ENCODE measurements at regions of chr15 and their contacts with region 1.

Region 1: DNA sequence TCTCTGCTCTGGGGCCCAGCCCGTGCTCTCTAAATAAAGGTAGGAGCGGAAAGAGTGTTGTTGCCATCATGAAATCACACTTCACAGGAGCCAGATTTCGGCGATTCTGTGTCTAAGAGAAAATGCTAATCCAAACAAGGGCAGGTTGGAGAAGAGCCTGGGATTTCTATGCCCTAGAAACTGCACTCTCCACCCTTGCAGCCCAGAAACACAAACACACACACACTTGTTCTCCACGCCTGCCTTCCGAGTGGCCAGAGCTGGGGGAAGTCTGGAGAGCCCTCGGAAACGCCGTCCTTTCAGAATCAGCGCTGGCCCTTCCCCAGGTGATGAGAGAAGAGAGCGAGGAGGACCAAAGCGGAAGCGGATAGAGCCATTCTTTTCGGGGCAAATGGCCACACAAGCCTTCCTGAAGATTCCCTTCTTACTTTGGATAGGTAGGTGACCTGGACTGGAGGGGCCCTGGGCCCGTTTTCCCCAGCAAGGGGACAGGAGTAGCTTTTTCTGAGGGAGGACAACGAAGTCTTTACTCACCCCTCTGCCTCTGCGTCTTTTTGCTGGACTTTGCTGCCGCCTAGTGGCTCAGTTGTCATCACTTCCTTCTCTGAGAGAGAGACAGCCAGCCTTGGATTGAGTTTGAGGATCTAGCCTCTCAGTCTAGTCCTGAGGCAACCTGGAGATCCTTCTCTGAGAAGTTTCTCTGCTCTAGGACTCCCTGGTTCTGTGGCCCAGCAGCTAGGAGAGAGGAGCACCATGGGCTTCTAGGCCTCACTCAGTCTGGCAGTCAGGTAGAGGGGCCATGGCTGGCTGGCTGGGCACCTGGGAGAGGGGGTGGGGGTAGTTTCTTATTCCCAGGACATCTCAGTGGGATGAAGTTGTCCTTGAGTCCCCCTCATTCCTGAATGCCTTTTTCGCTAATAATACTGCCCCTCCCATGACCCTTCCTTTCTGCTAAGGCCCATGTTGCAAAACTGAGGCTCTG is 37.7 kb downstream of the SENP8 start:
- DNase-seq: peak; percentile 69 to 85 (median 71)
- ATAC-seq: peak; percentile 98
- H3K4me3 ChIP-seq: no peak overlapping the region
- H3K27ac ChIP-seq: no peak overlapping the region
- H3K4me1 ChIP-seq: no peaks in the 10 kb centered on the region; a peak in 1 of 5 replicates
- H3K27me3 ChIP-seq: peaks cover 10 to 29% of the 10 kb centered on the region in 2 experiments; a peak in 4 of 5 replicates
- CTCF ChIP-seq: peak; percentile 85 to 96 (median 93)
- EP300 ChIP-seq: no peak
- POLR2A ChIP-seq: no peak
- RAD21 ChIP-seq: peak; percentile 82 to 96

Region 2: GRCh38 chr15:71532994-71533393 is 622.9 kb before region 1 on chr15:
- CTCF ChIA-PET with region 1: no interaction called
- POLR2A ChIA-PET with region 1: no interaction called
- in situ Hi-C with region 1: loop called (anchors 10 kb)
- intact Hi-C with region 1: loop called (anchors 5 kb)
- DNase-seq: peak; percentile 25 to 66 (median 56)
- ATAC-seq: peak; percentile 67
- H3K4me3 ChIP-seq: no peak overlapping the region
- H3K27ac ChIP-seq: no peak overlapping the region
- H3K4me1 ChIP-seq: no peaks in the 10 kb centered on the region
- H3K27me3 ChIP-seq: 0 out of 5 replicates have a peak, but pooled peaks cover 0 to 4% of the 10 kb centered on the region in 2 experiments
- CTCF ChIP-seq: peak; percentile 62 to 69 (median 67)
- EP300 ChIP-seq: no peak
- POLR2A ChIP-seq: no peak
- RAD21 ChIP-seq: peak; percentile 31 to 54; a peak in 3 of 4 replicates

Region 3: DNA sequence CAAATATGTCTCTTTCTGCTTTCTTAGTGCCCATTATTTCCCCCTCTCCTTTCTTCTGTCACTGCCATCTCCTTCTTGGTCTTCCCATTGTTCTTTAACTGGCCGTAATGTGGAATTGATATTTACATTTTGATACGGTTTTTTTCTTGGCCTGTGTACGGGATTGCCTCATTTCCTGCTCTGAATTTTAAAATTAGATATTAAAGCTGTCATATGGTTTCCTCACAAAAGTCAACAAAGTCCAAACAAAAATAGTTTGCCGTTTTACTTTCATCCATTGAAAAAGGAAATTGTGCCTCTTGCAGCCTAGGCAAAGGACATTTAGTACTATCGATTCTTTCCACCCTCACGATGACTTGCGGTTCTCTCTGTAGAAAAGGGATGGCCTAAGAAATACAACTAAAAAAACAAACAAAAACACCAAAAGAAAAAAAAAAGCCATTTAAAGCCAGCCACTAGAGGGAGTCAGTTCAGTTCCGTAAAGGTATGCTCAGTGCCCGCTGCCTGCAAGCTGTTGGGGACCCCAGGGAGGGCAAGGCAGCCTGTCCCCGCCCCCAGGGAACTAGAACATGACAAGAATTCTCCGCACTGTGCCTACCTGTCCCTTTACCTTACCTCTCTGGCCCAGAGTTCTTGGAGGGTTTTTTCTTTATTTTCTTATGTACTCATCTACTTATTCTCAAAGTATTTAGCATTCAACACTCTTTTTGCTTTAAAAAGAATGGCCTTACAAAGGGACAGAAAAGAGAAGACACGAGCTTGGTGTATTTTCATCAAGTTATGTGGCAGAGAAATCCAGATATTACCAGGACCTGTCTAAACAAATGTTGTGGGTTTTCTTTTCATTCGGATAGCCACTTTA is 375.6 kb before region 1 on chr15:
- CTCF ChIA-PET with region 1: interaction called, 17 read pairs
- POLR2A ChIA-PET with region 1: interaction called, 3 read pairs
- in situ Hi-C with region 1: no loop called
- intact Hi-C with region 1: loop called (anchors 5 kb)
- DNase-seq: peak; percentile 51 to 55 (median 54)
- ATAC-seq: peak; percentile 79
- H3K4me3 ChIP-seq: no peak overlapping the region
- H3K27ac ChIP-seq: no peak overlapping the region
- H3K4me1 ChIP-seq: no peaks in the 10 kb centered on the region
- H3K27me3 ChIP-seq: peaks cover 32 to 44% of the 10 kb centered on the region in 2 experiments
- CTCF ChIP-seq: peak; percentile 61 to 77 (median 76)
- EP300 ChIP-seq: no peak
- POLR2A ChIP-seq: no peak
- RAD21 ChIP-seq: no peak

Region 4: GRCh38 chr15:71806452-71806931 is 349.4 kb before region 1 on chr15:
- CTCF ChIA-PET with region 1: interaction called, 14 read pairs
- POLR2A ChIA-PET with region 1: no interaction called
- in situ Hi-C with region 1: loop called (anchors 5 kb)
- intact Hi-C with region 1: loop called (anchors 1 kb)
- DNase-seq: peak in 1 of 4 experiments; percentile 21
- ATAC-seq: no peak; the same call in 2 of the 3 replicates
- H3K4me3 ChIP-seq: no peak overlapping the region
- H3K27ac ChIP-seq: no peak overlapping the region
- H3K4me1 ChIP-seq: peaks cover 0 to 13% of the 10 kb centered on the region in 2 experiments; a peak in 2 of 5 replicates
- H3K27me3 ChIP-seq: peaks cover 28 to 48% of the 10 kb centered on the region in 2 experiments; a peak in 4 of 5 replicates
- CTCF ChIP-seq: no peak
- EP300 ChIP-seq: no peak
- POLR2A ChIP-seq: no peak
- RAD21 ChIP-seq: no peak

Region 5: GRCh38 chr15:71945012-71945411 is 210.9 kb before region 1 on chr15:
- CTCF ChIA-PET with region 1: no interaction called
- POLR2A ChIA-PET with region 1: no interaction called
- in situ Hi-C with region 1: no loop called
- intact Hi-C with region 1: no loop called
- DNase-seq: no peak
- ATAC-seq: no peak
- H3K4me3 ChIP-seq: no peak overlapping the region
- H3K27ac ChIP-seq: no peak overlapping the region
- H3K4me1 ChIP-seq: no peaks in the 10 kb centered on the region
- H3K27me3 ChIP-seq: no peaks in the 10 kb centered on the region
- CTCF ChIP-seq: no peak
- EP300 ChIP-seq: no peak
- POLR2A ChIP-seq: no peak
- RAD21 ChIP-seq: no peak

Region 6: DNA sequence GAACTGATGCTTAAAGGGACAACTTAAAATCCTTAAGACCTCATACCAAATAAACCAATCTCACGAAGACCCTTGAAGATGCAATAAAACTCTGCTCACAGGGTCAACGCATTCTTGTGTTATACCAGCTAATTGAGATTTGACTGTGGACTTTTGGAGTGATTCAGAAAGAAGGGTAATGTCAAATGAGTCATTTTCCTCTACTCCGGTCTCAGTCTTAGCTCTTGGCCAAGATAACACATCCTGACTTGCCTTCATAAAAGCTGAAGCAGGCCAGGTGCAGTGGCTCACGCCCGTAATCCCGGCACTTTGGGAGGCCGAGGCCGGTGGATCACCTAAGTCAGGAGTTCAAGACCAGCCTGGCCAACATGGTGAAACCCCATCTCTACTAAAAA is 71.3 kb after region 1 on chr15:
- CTCF ChIA-PET with region 1: no interaction called
- POLR2A ChIA-PET with region 1: no interaction called
- in situ Hi-C with region 1: no loop called
- intact Hi-C with region 1: no loop called
- DNase-seq: peak in 2 of 4 experiments; percentile 31 to 61
- ATAC-seq: no peak
- H3K4me3 ChIP-seq: peak overlapping the region; percentile 5; the same call in 1 of the 2 replicates
- H3K27ac ChIP-seq: peak overlapping the region; percentile 35; the same call in 2 of the 3 replicates
- H3K4me1 ChIP-seq: peaks cover 40 to 54% of the 10 kb centered on the region in 2 experiments
- H3K27me3 ChIP-seq: no peaks in the 10 kb centered on the region
- CTCF ChIP-seq: no peak
- EP300 ChIP-seq: no peak
- POLR2A ChIP-seq: no peak
- RAD21 ChIP-seq: no peak

Region 7: DNA sequence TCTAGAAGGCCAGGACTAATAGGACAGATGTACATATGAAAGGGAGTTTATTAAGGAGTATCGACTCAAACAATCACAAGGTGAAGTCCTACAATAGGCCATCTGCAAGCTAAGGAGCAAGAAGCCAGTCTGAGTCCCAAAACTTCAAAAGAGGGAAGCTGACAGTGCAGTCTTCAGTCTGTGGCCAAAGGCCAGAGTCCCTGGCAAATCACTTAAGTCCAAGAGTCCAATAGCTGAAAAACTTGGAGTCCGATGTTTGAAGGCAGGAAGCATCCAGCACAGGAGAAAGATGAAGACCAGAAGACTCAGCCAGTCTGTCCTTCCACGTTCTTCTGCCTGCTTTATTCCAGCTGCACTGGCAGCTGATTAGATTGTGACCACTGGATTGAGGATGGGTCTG is 175.1 kb after region 1 on chr15:
- CTCF ChIA-PET with region 1: no interaction called
- POLR2A ChIA-PET with region 1: no interaction called
- in situ Hi-C with region 1: no loop called
- intact Hi-C with region 1: no loop called
- DNase-seq: no peak
- ATAC-seq: no peak
- H3K4me3 ChIP-seq: no peak overlapping the region
- H3K27ac ChIP-seq: no peak overlapping the region
- H3K4me1 ChIP-seq: no peaks in the 10 kb centered on the region
- H3K27me3 ChIP-seq: no peaks in the 10 kb centered on the region
- CTCF ChIP-seq: no peak
- EP300 ChIP-seq: no peak
- POLR2A ChIP-seq: no peak
- RAD21 ChIP-seq: no peak